A549 (cell line): ENCODE measurements at regions of chr1 and their contacts with region 1.

Region 1: DNA sequence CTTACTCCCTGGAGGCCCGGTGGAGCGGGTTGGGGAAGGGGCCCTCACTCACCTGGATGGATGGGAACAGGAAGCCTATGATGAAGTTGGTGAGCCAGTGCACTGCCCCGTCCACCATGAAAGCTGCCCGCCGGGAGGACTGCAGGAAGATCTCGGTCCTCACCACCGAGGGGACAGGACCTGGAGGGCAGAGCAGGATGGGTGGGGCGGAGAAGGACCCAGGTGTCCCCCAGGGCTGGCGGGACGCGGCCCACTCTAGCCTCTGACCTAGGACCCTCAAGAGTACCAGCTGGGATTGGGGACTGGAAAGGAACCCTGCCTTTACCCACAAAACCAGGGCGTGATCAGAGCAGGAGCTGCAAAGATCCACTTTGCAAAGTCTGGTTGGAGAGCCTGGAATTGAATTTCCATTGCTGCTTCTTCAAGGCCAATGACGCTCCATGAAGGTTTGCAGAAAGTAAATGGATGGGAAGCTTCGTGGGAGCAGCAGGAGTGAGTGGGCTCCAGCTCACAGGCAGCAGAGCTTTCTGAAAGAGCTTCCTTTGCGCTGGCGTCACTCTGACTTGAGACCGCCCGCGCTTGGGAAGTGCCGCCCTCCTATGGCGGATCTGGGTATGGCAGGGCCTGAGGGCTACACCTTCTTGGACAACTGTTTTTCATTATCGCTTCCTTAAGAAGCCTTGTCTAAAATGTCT is 21.4 kb downstream of the SLC2A7 start:
- DNase-seq: peak; percentile 77 to 83
- ATAC-seq: peak; percentile 93 to 95
- H3K4me3 ChIP-seq: no peak overlapping the region
- H3K27ac ChIP-seq: peak overlapping the region in 1 of 2 experiments; percentile 66; a peak in 4 of 6 replicates
- H3K4me1 ChIP-seq: peaks cover 15% of the 10 kb centered on the region
- CTCF ChIP-seq: peak; percentile 72
- EP300 ChIP-seq: no peak
- POLR2A ChIP-seq: no peak
- RAD21 ChIP-seq: peak; percentile 72 to 79

Region 2: DNA sequence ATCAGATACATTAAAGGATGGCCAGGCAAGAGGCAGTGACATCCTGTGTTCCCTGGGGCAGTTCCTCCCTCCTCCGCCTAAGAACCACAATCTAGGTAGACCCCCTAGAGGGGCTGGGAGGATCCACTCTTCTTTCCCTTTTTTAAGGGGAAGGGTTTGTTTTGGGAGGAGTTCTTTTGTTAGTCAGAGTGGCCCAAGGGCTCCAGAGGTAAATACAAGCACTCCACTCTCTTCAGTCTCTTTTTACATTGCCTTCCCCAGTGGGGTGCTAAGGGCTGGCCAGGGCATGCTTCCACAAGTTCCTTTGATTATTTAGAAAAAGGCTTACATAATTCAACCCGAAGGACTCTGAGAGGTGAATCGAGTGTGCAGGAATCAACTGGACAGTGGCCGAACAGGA is 93.4 kb before region 1 on chr1:
- CTCF ChIA-PET with region 1: interaction called, 67 read pairs
- POLR2A ChIA-PET with region 1: no interaction called
- DNase-seq: peak in 1 of 2 experiments; percentile 44
- ATAC-seq: peak; percentile 28 to 32; a peak in 3 of 6 replicates
- H3K4me3 ChIP-seq: no peak overlapping the region
- H3K27ac ChIP-seq: no peak overlapping the region; a peak in 2 of 6 replicates
- H3K4me1 ChIP-seq: peaks cover 61% of the 10 kb centered on the region
- CTCF ChIP-seq: no peak
- EP300 ChIP-seq: no peak
- POLR2A ChIP-seq: no peak
- RAD21 ChIP-seq: no peak

Region 3: GRCh38 chr1:8943498-8943861 is 61.4 kb before region 1 on chr1:
- CTCF ChIA-PET with region 1: interaction called, 10 read pairs
- POLR2A ChIA-PET with region 1: no interaction called
- DNase-seq: no peak
- ATAC-seq: peak in 1 of 2 experiments; percentile 38; a peak in 3 of 6 replicates
- H3K4me3 ChIP-seq: no peak overlapping the region
- H3K27ac ChIP-seq: no peak overlapping the region
- H3K4me1 ChIP-seq: peaks cover 9% of the 10 kb centered on the region; the same call in 2 of the 3 replicates
- CTCF ChIP-seq: no peak
- EP300 ChIP-seq: no peak
- POLR2A ChIP-seq: no peak
- RAD21 ChIP-seq: no peak

Region 4: DNA sequence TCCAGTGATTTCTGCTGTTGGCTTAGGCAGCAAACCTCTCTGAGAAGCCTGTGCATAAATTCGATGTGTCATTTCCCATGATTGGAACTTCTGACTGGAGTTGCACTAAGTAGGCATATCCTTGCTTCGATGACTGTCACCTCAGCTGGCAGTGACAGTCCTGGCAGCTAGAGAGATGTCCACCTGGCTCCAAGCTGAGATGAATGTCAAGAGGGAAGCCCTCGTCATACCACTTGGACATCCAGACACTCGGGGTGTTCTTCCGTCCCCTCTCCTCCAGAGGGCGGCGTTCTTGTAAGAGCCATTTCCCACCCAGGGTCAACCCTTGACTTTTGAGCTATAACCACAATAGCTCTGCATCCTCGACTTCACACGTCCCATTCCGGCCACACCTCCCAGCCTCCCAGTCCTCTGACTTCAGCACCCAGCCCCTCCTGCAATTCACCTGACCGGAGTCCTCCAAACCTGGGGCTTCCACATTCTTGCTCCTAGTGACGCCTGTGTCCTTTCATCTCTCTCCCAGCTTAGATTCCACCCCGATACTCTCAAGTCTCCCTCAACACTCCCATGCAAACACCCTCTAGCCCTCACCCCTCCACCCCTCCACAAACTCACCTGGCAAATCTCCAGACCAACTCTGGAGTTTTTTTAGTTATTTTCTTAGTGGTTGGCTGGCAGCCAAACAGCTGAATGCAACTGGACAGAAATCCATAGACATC is 41.9 kb before region 1 on chr1:
- CTCF ChIA-PET with region 1: interaction called, 18 read pairs
- POLR2A ChIA-PET with region 1: no interaction called
- DNase-seq: peak; percentile 74 to 82
- ATAC-seq: peak; percentile 84 to 96; a peak in 4 of 6 replicates
- H3K4me3 ChIP-seq: no peak overlapping the region
- H3K27ac ChIP-seq: no peak overlapping the region
- H3K4me1 ChIP-seq: no peaks in the 10 kb centered on the region
- CTCF ChIP-seq: peak; percentile 44
- EP300 ChIP-seq: no peak
- POLR2A ChIP-seq: no peak
- RAD21 ChIP-seq: peak in 1 of 2 experiments; percentile 50; a peak in 1 of 5 replicates

Region 5: GRCh38 chr1:9048551-9048950 is 43.7 kb after region 1 on chr1:
- CTCF ChIA-PET with region 1: interaction called, 12 read pairs
- POLR2A ChIA-PET with region 1: no interaction called
- DNase-seq: no peak
- ATAC-seq: no peak
- H3K4me3 ChIP-seq: no peak overlapping the region
- H3K27ac ChIP-seq: no peak overlapping the region
- H3K4me1 ChIP-seq: no peaks in the 10 kb centered on the region
- CTCF ChIP-seq: no peak
- EP300 ChIP-seq: no peak
- POLR2A ChIP-seq: no peak
- RAD21 ChIP-seq: no peak

Region 6: DNA sequence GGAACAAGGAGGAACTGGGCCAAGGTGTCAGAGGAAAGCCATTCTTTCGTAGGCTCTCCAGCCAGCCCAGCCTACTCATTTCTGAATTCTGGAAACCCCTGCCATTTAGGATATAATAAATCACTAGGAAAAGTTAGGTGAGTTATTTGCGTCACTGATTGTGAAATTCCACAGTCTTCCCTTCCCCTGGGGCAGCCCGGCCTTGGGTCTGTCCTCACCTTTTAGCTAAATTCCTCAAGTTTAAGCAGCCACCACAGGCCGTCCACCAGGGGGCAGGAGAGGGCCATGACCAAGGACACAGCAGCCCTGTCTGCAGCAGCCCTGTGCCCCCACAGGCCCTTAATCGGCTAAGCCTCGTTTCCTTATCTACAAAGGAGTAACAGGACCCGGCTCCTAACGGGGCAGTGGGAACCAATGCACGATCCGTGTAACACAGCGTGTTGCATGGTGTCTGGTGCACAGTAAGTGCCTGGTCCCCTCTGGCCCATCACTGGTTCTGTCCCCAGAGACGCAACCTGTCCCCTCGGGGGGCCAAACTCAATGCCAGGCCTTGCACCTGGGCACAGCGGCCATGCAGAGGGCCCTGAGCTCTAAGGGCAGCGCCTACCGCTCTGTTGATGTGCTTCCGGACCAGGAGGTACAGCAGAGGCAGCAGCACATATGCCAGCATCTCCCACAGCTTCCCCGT is 106.0 kb after region 1 on chr1:
- CTCF ChIA-PET with region 1: interaction called, 36 read pairs
- POLR2A ChIA-PET with region 1: no interaction called
- DNase-seq: peak; percentile 77 to 93
- ATAC-seq: peak; percentile 94 to 97
- H3K4me3 ChIP-seq: no peak overlapping the region
- H3K27ac ChIP-seq: peak overlapping the region; percentile 58 to 88; a peak in 5 of 6 replicates
- H3K4me1 ChIP-seq: peaks cover 33% of the 10 kb centered on the region
- CTCF ChIP-seq: peak; percentile 77
- EP300 ChIP-seq: peak; percentile 12 to 63; a peak in 3 of 5 replicates
- POLR2A ChIP-seq: no peak
- RAD21 ChIP-seq: peak; percentile 90 to 92

Region 7: GRCh38 chr1:9486466-9487140 is 481.8 kb after region 1 on chr1:
- CTCF ChIA-PET with region 1: no interaction called
- POLR2A ChIA-PET with region 1: no interaction called
- DNase-seq: no peak
- ATAC-seq: no peak
- H3K4me3 ChIP-seq: no peak overlapping the region
- H3K27ac ChIP-seq: no peak overlapping the region; a peak in 1 of 6 replicates
- H3K4me1 ChIP-seq: 0 out of 3 replicates have a peak, but pooled peaks cover 3% of the 10 kb centered on the region
- CTCF ChIP-seq: no peak
- EP300 ChIP-seq: no peak
- POLR2A ChIP-seq: no peak
- RAD21 ChIP-seq: no peak